ENCODE measurements at regions of chr4 and their contacts with region 1.

Region 1: GRCh38 chr4:6673660-6674499 is 19.8 kb upstream of the S100P start:
- DNase-seq: peak; percentile 96
- ATAC-seq: peak; percentile 77
- H3K4me3 Mint-ChIP-seq: peak overlapping the region; percentile 93
- H3K27ac Mint-ChIP-seq: peak overlapping the region; percentile 99
- H3K4me1 Mint-ChIP-seq: peaks cover 40% of the 10 kb centered on the region
- H3K27me3 Mint-ChIP-seq: no peaks in the 10 kb centered on the region

Region 2: DNA sequence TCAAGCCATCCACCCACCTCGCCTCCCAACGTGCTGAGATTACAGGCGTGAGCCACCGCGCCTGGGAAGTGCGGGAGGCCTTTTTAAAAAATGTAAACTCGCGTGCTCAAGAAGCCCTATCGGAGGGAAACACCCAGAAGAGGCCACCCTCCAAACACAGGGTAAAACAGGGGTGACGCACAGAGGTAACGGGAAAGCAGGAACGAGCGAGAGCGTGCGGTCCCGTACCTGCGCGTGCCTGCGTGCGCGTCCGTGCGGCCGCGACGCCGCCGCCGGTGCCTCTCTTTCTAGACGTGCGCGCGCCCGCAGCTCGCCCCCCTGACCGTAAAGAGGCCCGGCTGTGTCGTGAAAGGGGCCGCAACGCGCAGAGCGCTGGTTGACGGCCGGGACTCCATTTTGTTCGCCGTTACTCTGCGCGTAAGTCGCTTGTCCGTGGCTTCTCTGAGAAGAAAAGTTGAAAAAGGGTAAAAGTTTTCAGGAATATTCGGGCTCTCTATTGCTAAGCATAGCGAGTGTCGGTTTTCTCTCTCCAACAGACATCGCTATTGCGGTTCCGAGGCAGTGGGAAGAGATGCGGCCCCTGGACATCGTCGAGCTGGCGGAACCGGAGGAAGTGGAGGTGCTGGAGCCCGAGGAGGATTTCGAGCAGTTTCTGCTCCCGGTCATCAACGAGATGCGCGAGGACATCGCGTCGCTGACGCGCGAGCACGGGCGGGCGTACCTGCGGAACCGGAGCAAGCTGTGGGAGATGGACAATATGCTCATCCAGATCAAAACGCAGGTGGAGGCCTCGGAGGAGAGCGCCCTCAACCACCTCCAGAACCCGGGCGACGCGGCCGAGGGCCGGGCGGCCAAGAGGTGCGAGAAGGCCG is 33.4 kb before region 1 on chr4 and contains the start of gene MRFAP1:
- CTCF ChIA-PET with region 1: interaction called, 6 read pairs
- POLR2A ChIA-PET with region 1: interaction called, 27 read pairs
- intact Hi-C with region 1: loop called (anchors 1 kb)
- DNase-seq: peak; percentile 97
- ATAC-seq: peak; percentile 86
- H3K4me3 Mint-ChIP-seq: peak within 1 kb of the TSS; percentile 96
- H3K27ac Mint-ChIP-seq: peak within 1 kb of the TSS; percentile 100
- H3K4me1 Mint-ChIP-seq: peaks cover 27% of the 10 kb centered on the region
- H3K27me3 Mint-ChIP-seq: no peaks in the 10 kb centered on the region
- total RNA-seq, gene MRFAP1: 66.8 to 122 TPM

Region 3: DNA sequence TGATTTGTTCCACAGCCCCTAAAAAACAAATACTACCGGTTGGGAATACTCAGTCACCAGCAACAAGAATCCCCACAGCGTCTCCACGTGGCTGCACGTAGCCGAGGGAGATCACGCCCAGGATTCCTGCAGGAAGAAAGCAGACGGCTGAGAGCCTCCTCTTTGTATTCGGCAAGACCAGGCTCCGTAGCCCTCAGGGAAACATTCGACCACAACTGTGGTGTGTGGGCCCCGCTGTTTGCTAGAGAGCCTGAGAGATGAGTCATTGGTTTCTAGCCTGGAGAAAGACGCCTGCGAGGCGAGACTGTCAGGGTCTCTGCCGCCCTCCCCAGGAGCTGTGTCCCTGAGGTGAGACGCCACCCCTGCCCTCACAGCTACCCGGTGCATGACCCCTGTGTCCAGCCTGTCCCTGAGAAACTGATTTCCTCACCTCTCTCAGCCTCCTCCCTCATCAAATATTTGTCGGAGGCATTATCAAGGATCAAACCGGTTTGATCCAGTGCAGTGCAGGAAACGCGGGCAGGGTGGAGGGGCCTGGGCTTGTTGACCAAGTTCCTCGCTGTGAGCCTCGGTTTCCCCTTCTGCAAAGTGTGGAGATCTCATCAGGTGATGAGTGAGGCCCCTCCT is 15.1 kb after region 1 on chr4:
- CTCF ChIA-PET with region 1: interaction called, 26 read pairs
- POLR2A ChIA-PET with region 1: interaction called, 25 read pairs
- intact Hi-C with region 1: loop called (anchors 1 kb)
- DNase-seq: peak; percentile 90
- ATAC-seq: peak; percentile 88
- H3K4me3 Mint-ChIP-seq: peak overlapping the region; percentile 39
- H3K27ac Mint-ChIP-seq: peak overlapping the region; percentile 91
- H3K4me1 Mint-ChIP-seq: peaks cover 57% of the 10 kb centered on the region
- H3K27me3 Mint-ChIP-seq: no peaks in the 10 kb centered on the region

Region 4: GRCh38 chr4:6701371-6701770 is 27.5 kb after region 1 on chr4:
- CTCF ChIA-PET with region 1: interaction called, 44 read pairs
- POLR2A ChIA-PET with region 1: interaction called, 42 read pairs
- intact Hi-C with region 1: loop called (anchors 2 kb)
- DNase-seq: peak; percentile 77
- ATAC-seq: no peak
- H3K4me3 Mint-ChIP-seq: no peak overlapping the region
- H3K27ac Mint-ChIP-seq: no peak overlapping the region
- H3K4me1 Mint-ChIP-seq: peaks cover 66% of the 10 kb centered on the region
- H3K27me3 Mint-ChIP-seq: no peaks in the 10 kb centered on the region

Region 5: GRCh38 chr4:6716018-6716911 is 42.4 kb after region 1 on chr4 and contains the start of gene BLOC1S4:
- CTCF ChIA-PET with region 1: interaction called, 13 read pairs
- POLR2A ChIA-PET with region 1: interaction called, 3 read pairs
- intact Hi-C with region 1: loop called (anchors 1 kb)
- DNase-seq: peak; percentile 93
- ATAC-seq: peak; percentile 80
- H3K4me3 Mint-ChIP-seq: peak within 1 kb of the TSS; percentile 92
- H3K27ac Mint-ChIP-seq: peak within 1 kb of the TSS; percentile 92
- H3K4me1 Mint-ChIP-seq: peaks cover 27% of the 10 kb centered on the region
- H3K27me3 Mint-ChIP-seq: no peaks in the 10 kb centered on the region
- total RNA-seq, gene BLOC1S4: 10.1 to 16.7 TPM

Region 6: DNA sequence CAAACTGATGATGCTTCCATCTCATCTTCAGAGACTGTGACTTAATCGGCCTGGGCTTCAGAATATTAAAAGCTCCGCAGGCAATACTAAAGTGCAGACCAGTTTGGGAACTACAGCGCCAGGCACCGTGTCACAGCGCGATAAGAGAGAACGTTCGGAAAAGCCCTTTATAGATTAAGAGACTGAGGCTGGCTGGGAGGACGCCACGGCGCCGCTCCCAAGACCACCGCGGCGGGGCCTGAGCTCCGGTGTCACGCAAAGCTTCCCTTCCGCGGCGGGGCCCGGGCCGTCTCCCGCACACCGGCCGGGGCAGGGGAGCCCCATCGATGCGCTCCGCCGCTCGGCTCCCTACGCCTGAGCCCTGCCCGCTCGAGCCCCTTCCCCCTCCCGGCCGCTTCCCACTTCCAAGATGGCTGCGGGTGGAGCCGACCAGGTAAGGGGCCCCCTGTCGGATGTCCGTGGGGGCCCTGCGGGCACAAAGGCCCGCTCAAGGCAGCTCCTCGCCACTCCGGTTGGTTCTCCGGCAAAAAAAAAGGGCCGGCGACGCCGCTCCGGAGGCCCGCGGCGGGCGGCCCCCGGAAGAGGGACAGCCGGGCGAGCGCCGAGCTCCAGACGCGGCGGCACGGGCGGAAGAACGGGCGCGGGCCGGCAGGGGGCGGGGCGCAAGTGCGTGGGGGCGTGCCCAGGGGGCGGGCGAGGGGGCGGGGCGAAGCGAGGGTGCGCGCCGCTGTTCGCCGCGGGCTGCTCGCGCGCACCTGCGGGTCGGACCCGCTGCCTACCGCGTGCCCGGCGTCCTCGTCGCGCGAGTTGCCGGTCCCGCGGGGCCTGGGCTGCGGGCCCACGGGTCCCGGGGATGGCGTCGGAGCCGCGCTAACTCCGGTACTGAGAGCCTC is 235.4 kb after region 1 on chr4 and contains the start of gene TBC1D14:
- CTCF ChIA-PET with region 1: no interaction called
- POLR2A ChIA-PET with region 1: interaction called, 10 read pairs
- intact Hi-C with region 1: loop called in 1 of 2 experiments (anchors 1 kb)
- DNase-seq: peak; percentile 92
- ATAC-seq: peak; percentile 89
- H3K4me3 Mint-ChIP-seq: peak within 1 kb of the TSS; percentile 94
- H3K27ac Mint-ChIP-seq: peak within 1 kb of the TSS; percentile 90
- H3K4me1 Mint-ChIP-seq: peaks cover 44% of the 10 kb centered on the region
- H3K27me3 Mint-ChIP-seq: peaks cover 3% of the 10 kb centered on the region
- total RNA-seq, gene TBC1D14: 36.7 to 44.0 TPM

Region 7: DNA sequence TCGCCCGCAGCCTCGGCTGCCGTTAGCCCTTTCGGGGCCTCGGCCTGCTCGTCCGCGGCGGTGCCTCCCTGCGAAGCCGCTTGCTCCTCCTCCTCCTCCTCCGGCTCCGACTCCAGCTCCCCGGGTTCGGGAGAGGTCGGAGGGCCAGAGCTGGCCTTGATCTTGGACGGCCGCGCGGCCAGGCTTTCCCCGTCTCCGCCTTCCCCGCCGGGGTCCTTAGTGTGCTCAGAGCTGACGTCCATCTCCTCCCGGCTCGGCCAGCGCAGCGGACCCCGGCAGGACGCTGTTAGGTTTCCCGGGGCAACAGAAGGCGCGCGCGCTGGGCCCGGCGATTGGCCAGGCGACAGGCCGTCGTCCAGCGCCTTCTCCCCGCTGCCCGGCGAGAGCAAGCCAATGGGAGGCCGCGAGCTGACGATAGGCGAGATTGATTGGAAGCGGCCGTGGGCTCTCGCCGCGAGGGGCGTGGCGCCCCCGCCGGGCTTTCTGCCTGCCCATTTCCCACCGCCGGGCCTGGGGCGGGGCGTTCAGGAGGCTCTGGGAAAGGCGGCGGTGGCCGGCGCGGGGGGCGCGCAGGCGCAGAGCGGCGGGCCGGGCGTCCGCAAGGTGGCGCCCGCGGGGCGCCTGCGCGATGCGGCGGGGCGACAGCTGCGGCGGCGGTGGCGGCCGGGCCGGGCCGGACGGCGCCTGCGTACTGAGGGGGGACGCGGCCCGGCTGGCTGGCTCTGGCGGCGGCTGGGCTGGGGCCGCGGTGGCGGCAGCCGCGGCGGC is 369.0 kb after region 1 on chr4 and contains the start of gene TADA2B:
- CTCF ChIA-PET with region 1: interaction called, 3 read pairs
- POLR2A ChIA-PET with region 1: no interaction called
- intact Hi-C with region 1: loop called in 1 of 2 experiments (anchors 1 kb)
- DNase-seq: peak; percentile 95
- ATAC-seq: peak; percentile 87
- H3K4me3 Mint-ChIP-seq: peak within 1 kb of the TSS; percentile 86
- H3K27ac Mint-ChIP-seq: peak within 1 kb of the TSS; percentile 77
- H3K4me1 Mint-ChIP-seq: peaks cover 46% of the 10 kb centered on the region
- H3K27me3 Mint-ChIP-seq: peaks cover 3% of the 10 kb centered on the region
- total RNA-seq, gene TADA2B: 9.0 to 10.6 TPM